ENCODE measurements at regions of chr15 and their contacts with region 1.

Region 1: GRCh38 chr15:68053701-68054627 is at the start of gene PIAS1:
- DNase-seq: peak; percentile 97 to 98 (median 98)
- ATAC-seq: peak; percentile 99
- H3K4me3 ChIP-seq: peak within 1 kb of the TSS; percentile 98
- H3K27ac ChIP-seq: peak within 1 kb of the TSS; percentile 92
- H3K4me1 ChIP-seq: peaks cover 4% of the 10 kb centered on the region
- H3K27me3 ChIP-seq: no peaks in the 10 kb centered on the region
- total RNA-seq, gene PIAS1: 34.1 to 38.2 (median 35.9) TPM

Region 2: GRCh38 chr15:67836477-67836876 is 217.5 kb before region 1 on chr15:
- intact Hi-C with region 1: no loop called
- DNase-seq: peak in 1 of 3 donors; percentile 75
- ATAC-seq: no peak
- H3K4me3 ChIP-seq: peak overlapping the region; percentile 50
- H3K27ac ChIP-seq: no peak overlapping the region
- H3K4me1 ChIP-seq: peaks cover 5% of the 10 kb centered on the region
- H3K27me3 ChIP-seq: no peaks in the 10 kb centered on the region

Region 3: DNA sequence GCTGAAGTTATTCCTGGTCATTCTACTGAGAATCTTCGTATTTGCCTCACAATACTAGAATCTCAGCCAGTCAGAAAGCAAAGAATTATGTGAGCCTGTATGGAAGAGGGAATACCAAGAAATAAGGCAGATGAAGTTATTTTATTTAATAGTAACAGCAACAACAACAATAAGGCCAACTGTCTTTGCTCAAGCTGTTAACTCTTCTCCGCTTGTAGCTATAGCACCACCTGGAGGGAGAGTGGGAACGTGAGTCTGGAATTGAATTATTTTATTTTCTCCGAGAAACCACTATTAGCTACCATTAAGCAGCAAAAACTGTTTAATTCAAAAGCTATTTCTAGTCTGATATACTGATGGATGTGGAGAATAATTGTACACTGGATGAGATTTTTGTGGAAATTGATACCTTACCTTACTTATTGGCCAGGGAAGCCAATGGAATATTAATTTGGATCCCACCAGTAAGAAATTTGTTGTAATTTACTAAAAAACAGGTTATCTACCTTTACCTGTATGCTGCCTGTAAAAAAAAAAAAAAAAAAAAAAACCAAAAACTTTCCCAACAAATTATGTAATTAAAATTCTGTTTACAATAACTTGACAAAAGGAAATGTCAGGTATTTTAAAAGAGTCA is 101.1 kb after region 1 on chr15:
- intact Hi-C with region 1: loop called in 2 of 4 experiments (anchors 10 kb)
- DNase-seq: peak in 2 of 3 donors; percentile 27 to 46
- ATAC-seq: peak; percentile 47 to 69
- H3K4me3 ChIP-seq: no peak overlapping the region
- H3K27ac ChIP-seq: no peak overlapping the region
- H3K4me1 ChIP-seq: no peaks in the 10 kb centered on the region
- H3K27me3 ChIP-seq: no peaks in the 10 kb centered on the region

Measured in right cardiac atrium (tissue), 5 donors.